ENCODE measurements at regions of chr15 and their contacts with region 1.

Region 1: GRCh38 chr15:75647370-75648155 is at the start of gene SNX33:
- H3K4me3 ChIP-seq: peak within 1 kb of the TSS; percentile 73
- H3K27ac ChIP-seq: peak within 1 kb of the TSS; percentile 74; the same call in 1 of the 2 replicates
- H3K4me1 ChIP-seq: no peaks in the 10 kb centered on the region
- CTCF ChIP-seq: peak; percentile 99

Region 2: GRCh38 chr15:75407083-75407482 is 240.5 kb before region 1 on chr15:
- CTCF ChIA-PET with region 1: interaction called, 3 read pairs
- POLR2A ChIA-PET with region 1: interaction called, 10 read pairs
- H3K4me3 ChIP-seq: no peak overlapping the region
- H3K27ac ChIP-seq: peak overlapping the region; percentile 5; the same call in 1 of the 2 replicates
- H3K4me1 ChIP-seq: no peaks in the 10 kb centered on the region
- CTCF ChIP-seq: no peak

Region 3: DNA sequence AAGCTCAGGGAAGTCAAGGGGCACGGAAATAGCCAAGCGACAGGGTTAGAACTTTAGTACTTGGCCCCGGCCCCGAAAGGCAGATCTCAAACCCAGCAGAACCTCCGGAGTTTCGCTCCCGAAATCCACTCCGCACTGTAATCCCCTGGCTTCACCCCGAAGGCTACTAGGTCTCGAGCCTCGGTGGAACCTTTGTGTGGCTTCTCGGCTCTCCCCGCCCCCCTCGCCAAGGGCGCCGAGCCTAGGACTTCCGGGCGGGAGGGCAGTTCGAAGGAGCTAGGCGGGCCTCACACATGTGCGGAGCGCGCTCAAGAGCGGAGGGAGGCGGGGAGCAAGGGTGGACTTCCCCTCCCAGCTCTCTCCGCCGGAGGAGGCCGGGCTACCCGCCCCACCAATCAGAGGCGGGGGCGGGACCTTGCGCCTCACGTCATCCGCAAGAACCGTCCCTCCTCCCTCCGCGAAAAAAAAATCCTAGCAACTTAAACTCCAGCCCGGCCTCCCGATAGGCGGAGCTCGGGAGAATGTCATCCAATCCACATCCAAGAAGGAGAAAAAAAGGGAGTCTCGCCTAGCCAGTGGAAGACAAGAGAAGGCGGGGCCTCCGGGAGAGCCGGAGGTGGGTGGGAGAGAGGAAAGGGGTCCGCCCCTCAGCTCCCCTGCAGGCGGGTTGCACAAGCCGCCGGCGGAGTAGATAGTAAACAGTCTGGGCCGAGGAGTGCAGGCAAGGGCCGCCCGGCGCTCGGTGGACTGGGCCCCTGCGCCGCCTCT is 193.7 kb before region 1 on chr15:
- CTCF ChIA-PET with region 1: interaction called, 3 read pairs
- POLR2A ChIA-PET with region 1: interaction called, 24 read pairs
- H3K4me3 ChIP-seq: peak overlapping the region; percentile 70
- H3K27ac ChIP-seq: peak overlapping the region; percentile 87
- H3K4me1 ChIP-seq: peaks cover 15% of the 10 kb centered on the region
- CTCF ChIP-seq: no peak

Region 4: DNA sequence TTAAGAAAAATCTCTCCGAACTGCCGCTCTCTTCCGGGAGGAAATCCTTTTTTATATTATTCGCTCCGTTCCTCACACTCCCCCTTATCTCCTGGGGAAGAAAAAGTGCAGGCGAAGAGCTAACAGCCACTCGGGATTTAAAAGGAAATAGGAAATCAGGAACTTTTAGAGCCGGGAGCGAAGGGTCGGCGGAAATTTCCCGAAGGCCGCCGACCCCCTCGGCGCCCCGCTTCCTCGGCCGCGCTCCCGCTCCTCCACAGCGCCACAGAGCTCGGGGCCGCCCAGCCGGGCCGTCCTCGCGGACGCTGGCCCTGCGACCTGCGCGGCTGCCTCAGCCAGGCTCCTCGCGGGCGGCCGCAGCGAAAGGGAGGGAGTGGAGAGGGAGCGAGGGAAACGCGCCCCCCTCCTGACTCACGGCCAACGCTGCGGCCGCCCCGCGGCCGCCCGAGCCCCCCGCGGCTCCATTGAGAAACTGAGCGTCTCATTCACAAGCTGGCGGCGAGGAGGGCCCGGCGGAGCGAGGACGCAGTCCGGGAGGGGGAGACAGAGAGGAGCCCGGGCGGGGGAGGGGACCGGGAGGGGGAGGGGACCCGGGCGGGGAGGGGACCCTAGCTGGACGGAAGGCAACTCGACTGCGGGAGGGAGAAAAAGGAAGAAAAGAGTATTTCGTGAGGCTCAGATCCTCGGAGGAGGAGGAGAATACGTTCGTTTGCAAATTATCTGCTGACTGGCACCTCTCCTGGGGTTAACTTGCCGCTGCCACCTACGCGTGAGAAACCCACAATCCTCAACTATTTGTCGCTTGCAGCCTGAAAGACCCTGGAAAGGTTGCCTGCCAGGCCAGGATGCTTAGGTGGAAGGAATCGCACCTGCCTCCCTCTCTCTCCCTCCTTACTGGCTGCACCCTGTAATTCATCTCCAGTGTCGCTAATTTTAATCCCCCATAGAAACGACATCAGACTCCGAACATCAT is 68.3 kb before region 1 on chr15 and contains the start of gene PTPN9:
- CTCF ChIA-PET with region 1: no interaction called
- POLR2A ChIA-PET with region 1: interaction called, 11 read pairs
- H3K4me3 ChIP-seq: peak within 1 kb of the TSS; percentile 84
- H3K27ac ChIP-seq: peak within 1 kb of the TSS; percentile 96
- H3K4me1 ChIP-seq: peaks cover 14% of the 10 kb centered on the region
- CTCF ChIP-seq: peak; percentile 79

Region 5: DNA sequence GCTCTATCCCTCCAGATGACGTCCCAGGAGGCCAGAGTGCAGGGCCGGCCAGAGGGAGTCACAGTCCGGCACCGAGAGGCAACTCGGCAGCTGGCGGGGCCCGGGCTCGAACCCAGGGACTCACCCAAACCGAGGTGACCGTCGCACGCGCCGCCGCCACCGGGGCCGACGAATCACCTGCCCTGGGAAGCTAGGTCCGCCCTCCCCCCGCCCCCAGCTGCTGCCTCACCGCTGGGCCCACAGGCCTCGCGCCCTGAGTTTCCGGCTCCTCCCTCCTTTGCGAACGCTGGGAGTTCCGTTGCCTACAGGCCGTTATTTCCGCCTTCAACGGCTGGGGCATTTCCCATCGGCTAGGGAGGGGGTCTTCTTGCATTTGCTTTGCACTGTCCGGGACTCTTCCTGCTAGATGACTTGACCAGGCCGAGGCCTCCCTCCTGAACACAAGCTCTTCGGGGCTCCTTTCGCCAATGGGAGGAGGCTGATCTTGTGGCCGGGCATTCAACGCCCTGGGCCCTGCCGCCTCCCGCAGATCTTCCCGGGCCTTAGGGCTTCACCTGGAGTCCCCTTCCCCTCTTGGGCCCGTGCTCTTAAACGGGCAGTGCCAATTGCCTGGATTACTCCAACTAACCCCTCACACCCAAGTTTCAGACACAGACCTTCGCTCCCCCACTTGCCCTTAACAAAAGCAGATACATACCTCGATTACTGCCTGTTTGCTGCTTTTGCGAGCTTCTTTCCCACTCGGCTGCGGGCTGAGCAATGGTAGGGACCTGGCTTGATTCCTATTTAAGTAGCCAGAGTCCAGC is 21.8 kb before region 1 on chr15 and contains the start of gene SNUPN:
- CTCF ChIA-PET with region 1: interaction called, 7 read pairs
- POLR2A ChIA-PET with region 1: interaction called, 10 read pairs
- H3K4me3 ChIP-seq: peak within 1 kb of the TSS; percentile 96
- H3K27ac ChIP-seq: peak within 1 kb of the TSS; percentile 96
- H3K4me1 ChIP-seq: no peaks in the 10 kb centered on the region; the same call in 1 of the 2 replicates
- CTCF ChIP-seq: peak; percentile 6; the same call in 1 of the 2 replicates

Region 6: GRCh38 chr15:75661091-75661777 is 13.7 kb after region 1 on chr15:
- CTCF ChIA-PET with region 1: interaction called, 5 read pairs
- POLR2A ChIA-PET with region 1: interaction called, 10 read pairs
- H3K4me3 ChIP-seq: no peak overlapping the region
- H3K27ac ChIP-seq: no peak overlapping the region
- H3K4me1 ChIP-seq: no peaks in the 10 kb centered on the region
- CTCF ChIP-seq: no peak

Region 7: DNA sequence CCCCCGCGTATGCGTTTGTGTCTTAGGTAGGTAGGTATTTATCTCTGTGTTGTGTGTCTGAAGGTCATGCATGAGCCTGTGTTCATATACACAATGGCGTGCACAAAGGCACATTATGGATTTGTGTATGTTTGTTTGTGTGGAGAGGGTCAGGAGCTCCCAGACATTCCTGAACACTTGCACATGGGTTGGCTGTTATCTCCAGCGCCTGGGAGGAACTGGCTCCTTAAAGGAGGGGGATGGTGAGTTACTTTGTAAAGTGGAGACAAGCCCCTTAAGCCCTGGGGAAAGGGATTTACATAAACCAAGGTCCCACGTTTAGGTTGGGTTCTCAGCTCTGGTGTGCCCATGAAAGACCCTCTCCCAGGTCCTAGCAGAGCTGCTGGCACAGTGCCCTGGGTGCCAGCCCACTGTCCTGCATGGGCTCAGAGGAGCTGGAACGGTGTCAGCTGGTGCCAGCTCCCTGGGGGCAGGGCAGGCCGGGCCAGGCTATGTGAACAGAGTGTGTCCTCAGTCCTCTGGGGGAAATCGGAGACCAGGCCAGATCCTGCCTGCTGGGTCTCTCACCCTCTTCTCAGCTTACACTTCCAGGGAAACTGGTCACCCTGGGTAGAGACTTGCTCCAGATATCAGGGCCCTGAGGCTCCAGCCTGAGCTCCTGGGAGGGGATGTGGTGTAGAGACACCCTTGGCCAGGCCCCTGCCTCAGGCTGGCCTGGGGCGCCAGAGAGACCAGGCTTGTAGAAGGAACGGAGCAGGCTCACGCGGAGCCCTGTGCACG is 25.3 kb after region 1 on chr15:
- CTCF ChIA-PET with region 1: interaction called, 8 read pairs
- POLR2A ChIA-PET with region 1: interaction called, 13 read pairs
- H3K4me3 ChIP-seq: no peak overlapping the region
- H3K27ac ChIP-seq: peak overlapping the region; percentile 36; the same call in 1 of the 2 replicates
- H3K4me1 ChIP-seq: peaks cover 10% of the 10 kb centered on the region
- CTCF ChIP-seq: 0 out of 2 replicates have a peak, but pooled peaks have one; percentile 38

Region 8: GRCh38 chr15:75750261-75751050 is 102.9 kb after region 1 on chr15:
- CTCF ChIA-PET with region 1: no interaction called
- POLR2A ChIA-PET with region 1: no interaction called
- H3K4me3 ChIP-seq: no peak overlapping the region
- H3K27ac ChIP-seq: no peak overlapping the region
- H3K4me1 ChIP-seq: no peaks in the 10 kb centered on the region
- CTCF ChIP-seq: no peak